Naive thymus-derived CD4-positive, alpha-beta T cell (primary cell): ENCODE measurements at regions of chr13 and their contacts with region 1.

Region 1: DNA sequence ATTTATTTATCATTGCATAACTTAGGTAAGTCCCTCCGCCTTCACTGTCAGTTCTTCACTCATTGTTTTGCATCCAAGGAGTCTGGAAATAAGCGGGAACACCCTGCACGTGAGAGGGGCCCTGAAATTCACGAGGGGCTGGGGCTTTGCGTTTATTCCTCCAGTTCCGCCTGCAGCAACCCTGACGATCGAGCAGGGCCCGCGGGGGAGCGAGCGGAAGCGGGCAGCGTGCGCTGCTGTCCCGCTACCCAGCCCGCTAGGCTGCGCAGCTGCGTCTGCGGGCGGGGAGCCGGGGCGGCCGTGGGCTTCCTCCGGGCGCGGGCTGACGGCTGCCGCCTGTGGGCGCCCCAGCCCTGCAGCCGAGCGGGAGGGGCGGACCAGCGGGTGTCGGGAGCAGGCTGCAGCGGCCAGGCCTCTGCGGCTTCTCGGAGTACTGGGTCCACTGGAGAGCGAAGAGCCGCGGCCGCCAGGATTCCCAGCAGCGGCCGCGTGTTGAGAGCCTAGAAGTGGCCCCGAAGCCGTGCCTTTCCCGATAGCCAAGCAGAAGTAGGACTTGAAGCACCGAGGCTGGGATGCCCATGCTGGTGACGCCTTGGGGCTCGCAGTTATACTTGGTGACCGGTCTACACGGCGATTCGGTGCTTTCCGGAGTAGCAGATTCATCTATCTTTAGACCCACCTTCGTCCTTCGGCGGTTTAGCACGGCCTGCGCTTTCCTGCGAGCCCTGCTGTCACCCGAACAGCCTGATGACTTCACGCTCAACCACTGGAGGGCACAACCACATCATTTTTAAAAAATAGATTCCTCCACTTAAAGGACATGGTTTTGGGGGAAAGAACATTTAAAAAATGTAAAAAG is 32.9 kb upstream of the SACS start:
- DNase-seq: peak; percentile 38 to 69 (median 65)
- ATAC-seq: peak; percentile 94
- H3K4me3 ChIP-seq: peak overlapping the region; percentile 65
- H3K4me3 Mint-ChIP-seq: peak overlapping the region; percentile 79 to 89 (median 84)
- H3K27ac ChIP-seq: no peak overlapping the region
- H3K27ac Mint-ChIP-seq: peak overlapping the region in 4 of 9 donors; percentile 45 to 69 (median 61)
- H3K4me1 ChIP-seq: peaks cover 0 to 4% of the 10 kb centered on the region in 2 donors
- H3K4me1 Mint-ChIP-seq: peaks cover 0 to 8% (median 4%) of the 10 kb centered on the region in 7 donors
- H3K27me3 ChIP-seq: no peaks in the 10 kb centered on the region
- H3K27me3 Mint-ChIP-seq: peaks cover 0 to 46% (median 6%) of the 10 kb centered on the region in 5 donors

Region 2: DNA sequence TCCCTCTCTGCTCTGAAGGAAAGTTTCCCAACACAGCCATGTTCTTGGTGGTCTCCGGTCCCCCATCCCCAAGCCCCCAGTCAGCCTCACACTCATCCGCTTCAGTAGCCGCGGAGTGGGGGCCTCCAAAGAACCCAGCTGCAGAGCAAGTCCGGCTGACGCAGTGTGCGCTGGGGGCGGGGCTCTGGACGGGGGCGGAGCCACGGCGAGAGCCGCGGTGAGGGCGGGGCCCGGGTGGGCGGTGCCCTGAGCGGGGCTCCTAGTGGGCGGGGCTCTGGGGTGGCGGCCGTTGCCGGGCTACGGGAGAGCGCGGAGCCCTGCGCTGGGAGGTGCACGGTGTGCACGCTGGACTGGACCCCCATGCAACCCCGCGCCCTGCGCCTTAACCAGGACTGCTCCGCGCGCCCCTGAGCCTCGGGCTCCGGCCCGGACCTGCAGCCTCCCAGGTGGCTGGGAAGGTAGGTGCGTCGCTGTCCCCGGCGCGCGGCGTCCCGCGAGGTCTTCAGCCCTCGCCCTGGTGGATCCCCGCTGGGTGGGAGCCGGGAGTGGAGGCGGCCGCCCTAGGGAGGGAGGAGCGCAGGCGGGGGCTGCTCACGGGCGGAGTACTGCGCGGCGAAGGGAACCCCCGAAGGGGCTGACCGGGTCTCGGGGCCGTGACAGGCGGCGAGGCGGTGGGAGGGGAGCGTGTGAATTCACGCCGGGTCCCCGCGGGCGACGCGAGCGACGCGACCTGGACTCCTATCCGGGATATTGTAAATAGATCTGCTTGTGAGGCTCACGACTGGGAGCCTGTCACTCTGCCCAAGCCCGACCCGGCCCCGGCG is 112.9 kb after region 1 on chr13:
- CTCF ChIA-PET with region 1: no interaction called
- POLR2A ChIA-PET with region 1: no interaction called
- intact Hi-C with region 1: loop called (anchors 1 kb)
- DNase-seq: peak; percentile 76 to 96 (median 87)
- ATAC-seq: peak; percentile 99
- H3K4me3 ChIP-seq: peak overlapping the region; percentile 79
- H3K4me3 Mint-ChIP-seq: peak overlapping the region; percentile 43 to 89 (median 81)
- H3K27ac ChIP-seq: peak overlapping the region; percentile 67
- H3K27ac Mint-ChIP-seq: peak overlapping the region in 3 of 9 donors; percentile 46 to 80 (median 65)
- H3K4me1 ChIP-seq: peaks cover 0 to 4% of the 10 kb centered on the region in 2 donors
- H3K4me1 Mint-ChIP-seq: peaks cover 10 to 22% (median 18%) of the 10 kb centered on the region in 7 donors
- H3K27me3 ChIP-seq: peaks cover 0 to 11% of the 10 kb centered on the region in 2 donors
- H3K27me3 Mint-ChIP-seq: peaks cover 34 to 72% (median 46%) of the 10 kb centered on the region in 5 donors

Region 3: DNA sequence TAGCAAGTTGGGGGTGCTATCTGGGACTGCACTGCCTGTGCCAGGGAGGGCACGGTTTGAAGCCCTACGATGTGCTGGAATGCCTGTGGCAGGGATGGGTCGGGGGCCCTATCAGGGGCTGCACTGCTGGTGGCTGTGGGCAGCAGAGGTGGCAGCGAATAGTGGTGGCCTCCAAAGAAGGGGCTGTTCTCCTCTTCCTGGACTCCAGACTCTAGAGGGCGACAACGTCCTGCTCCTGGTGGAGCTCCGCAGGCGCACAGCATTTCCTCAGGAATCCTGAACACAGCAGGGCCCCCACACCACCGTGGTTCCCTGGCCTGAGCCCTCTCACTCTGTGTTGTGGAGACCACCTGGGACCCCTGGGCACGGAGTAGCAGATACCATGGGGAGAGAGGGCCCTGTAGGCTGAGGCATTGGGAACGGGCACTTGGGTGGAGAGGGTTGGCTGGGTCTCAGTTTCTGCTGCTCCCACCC is 249.4 kb after region 1 on chr13:
- CTCF ChIA-PET with region 1: no interaction called
- POLR2A ChIA-PET with region 1: no interaction called
- intact Hi-C with region 1: loop called in 1 of 2 experiments (anchors 10 kb)
- DNase-seq: no peak
- ATAC-seq: no peak
- H3K4me3 ChIP-seq: no peak overlapping the region
- H3K4me3 Mint-ChIP-seq: no peak overlapping the region
- H3K27ac ChIP-seq: no peak overlapping the region
- H3K27ac Mint-ChIP-seq: no peak overlapping the region
- H3K4me1 ChIP-seq: no peaks in the 10 kb centered on the region
- H3K4me1 Mint-ChIP-seq: peaks cover 14 to 38% (median 32%) of the 10 kb centered on the region in 7 donors
- H3K27me3 ChIP-seq: no peaks in the 10 kb centered on the region
- H3K27me3 Mint-ChIP-seq: peaks cover 0 to 18% (median 11%) of the 10 kb centered on the region in 5 donors

Region 4: GRCh38 chr13:23871616-23872220 is 405.3 kb after region 1 on chr13:
- CTCF ChIA-PET with region 1: interaction called, 11 read pairs
- POLR2A ChIA-PET with region 1: no interaction called
- intact Hi-C with region 1: loop called (anchors 1 kb)
- DNase-seq: peak in 4 of 9 donors; percentile 11 to 30 (median 23)
- ATAC-seq: no peak
- H3K4me3 ChIP-seq: no peak overlapping the region
- H3K4me3 Mint-ChIP-seq: no peak overlapping the region
- H3K27ac ChIP-seq: no peak overlapping the region
- H3K27ac Mint-ChIP-seq: no peak overlapping the region
- H3K4me1 ChIP-seq: no peaks in the 10 kb centered on the region
- H3K4me1 Mint-ChIP-seq: no peaks in the 10 kb centered on the region
- H3K27me3 ChIP-seq: no peaks in the 10 kb centered on the region
- H3K27me3 Mint-ChIP-seq: no peaks in the 10 kb centered on the region

Region 5: DNA sequence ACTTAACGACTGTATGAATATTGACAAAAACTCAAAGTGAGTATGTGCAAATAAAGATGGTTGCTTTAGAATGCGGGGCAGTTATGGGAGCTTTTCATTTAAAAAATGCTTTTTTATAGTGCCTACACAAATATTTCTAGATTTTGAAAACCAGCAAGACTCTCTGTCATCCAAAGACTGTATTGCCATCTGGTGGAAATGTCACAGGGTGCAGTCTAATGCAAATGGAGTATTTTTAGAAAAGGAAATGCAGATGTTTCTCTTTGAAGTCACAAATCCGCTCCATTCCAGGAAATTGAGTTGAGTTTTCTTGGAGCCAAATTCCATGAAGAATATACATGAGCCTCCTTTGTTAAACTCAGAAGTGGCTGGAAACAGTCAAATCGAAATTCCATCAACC is 433.2 kb after region 1 on chr13:
- CTCF ChIA-PET with region 1: interaction called, 6 read pairs
- POLR2A ChIA-PET with region 1: no interaction called
- intact Hi-C with region 1: loop called in 1 of 2 experiments (anchors 1 kb)
- DNase-seq: peak in 5 of 9 donors; percentile 12 to 41 (median 28)
- ATAC-seq: peak; percentile 74
- H3K4me3 ChIP-seq: no peak overlapping the region
- H3K4me3 Mint-ChIP-seq: no peak overlapping the region
- H3K27ac ChIP-seq: no peak overlapping the region
- H3K27ac Mint-ChIP-seq: no peak overlapping the region
- H3K4me1 ChIP-seq: no peaks in the 10 kb centered on the region
- H3K4me1 Mint-ChIP-seq: peaks cover 0 to 10% (median 3%) of the 10 kb centered on the region in 7 donors
- H3K27me3 ChIP-seq: peaks cover 0 to 10% of the 10 kb centered on the region in 2 donors
- H3K27me3 Mint-ChIP-seq: peaks cover 26 to 42% (median 37%) of the 10 kb centered on the region in 5 donors

Region 6: DNA sequence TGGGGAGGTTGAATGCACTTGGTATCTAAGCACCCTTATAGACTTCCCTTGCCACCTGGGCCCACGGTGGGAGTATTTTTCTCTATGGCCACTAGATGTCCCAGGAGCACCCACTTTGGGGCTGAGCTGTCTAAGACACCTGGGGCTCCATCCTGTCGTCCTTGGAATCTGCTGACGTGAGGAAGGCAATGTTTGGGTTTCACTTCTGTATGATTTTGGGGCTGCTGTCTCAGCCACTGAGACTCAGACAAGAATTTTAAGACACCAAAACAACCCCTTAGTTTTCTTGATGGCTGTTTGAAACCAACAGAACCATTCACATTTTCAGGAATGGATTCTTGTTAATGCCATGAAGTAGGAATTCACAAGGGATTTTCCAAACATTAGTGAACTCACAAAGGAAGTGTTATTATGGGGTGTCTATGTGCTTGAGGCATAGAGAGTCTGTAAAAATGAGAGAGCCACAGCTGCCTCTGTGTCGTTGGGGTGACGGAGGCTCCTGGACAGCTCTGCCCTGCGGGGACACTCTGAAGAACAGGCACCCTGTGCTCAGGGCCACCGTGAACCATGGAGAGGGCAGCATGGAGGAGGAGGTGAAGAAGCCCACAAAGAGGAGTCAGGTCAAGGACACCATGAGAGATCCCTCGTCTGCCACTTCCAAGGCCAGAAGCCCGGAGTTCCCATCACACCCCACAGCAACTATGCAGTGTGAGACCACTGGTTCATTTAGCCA is 587.3 kb after region 1 on chr13:
- CTCF ChIA-PET with region 1: no interaction called
- POLR2A ChIA-PET with region 1: no interaction called
- intact Hi-C with region 1: loop called in 1 of 2 experiments (anchors 1 kb)
- DNase-seq: peak; percentile 24 to 70 (median 61)
- ATAC-seq: peak; percentile 91
- H3K4me3 ChIP-seq: no peak overlapping the region
- H3K4me3 Mint-ChIP-seq: no peak overlapping the region
- H3K27ac ChIP-seq: no peak overlapping the region
- H3K27ac Mint-ChIP-seq: peak overlapping the region in 5 of 9 donors; percentile 21 to 68 (median 24)
- H3K4me1 ChIP-seq: no peaks in the 10 kb centered on the region
- H3K4me1 Mint-ChIP-seq: peaks cover 0 to 12% (median 9%) of the 10 kb centered on the region in 7 donors
- H3K27me3 ChIP-seq: no peaks in the 10 kb centered on the region
- H3K27me3 Mint-ChIP-seq: peaks cover 3 to 22% (median 7%) of the 10 kb centered on the region in 5 donors

Region 7: GRCh38 chr13:24922745-24923591 is 1456.6 kb after region 1 on chr13:
- CTCF ChIA-PET with region 1: no interaction called
- POLR2A ChIA-PET with region 1: no interaction called
- intact Hi-C with region 1: loop called in 1 of 2 experiments (anchors 2 kb)
- DNase-seq: peak; percentile 79 to 93 (median 87)
- ATAC-seq: peak; percentile 100
- H3K4me3 ChIP-seq: peak overlapping the region; percentile 78
- H3K4me3 Mint-ChIP-seq: peak overlapping the region; percentile 89 to 100 (median 98)
- H3K27ac ChIP-seq: peak overlapping the region; percentile 71
- H3K27ac Mint-ChIP-seq: peak overlapping the region; percentile 73 to 95 (median 91)
- H3K4me1 ChIP-seq: no peaks in the 10 kb centered on the region
- H3K4me1 Mint-ChIP-seq: peaks cover 0 to 22% (median 14%) of the 10 kb centered on the region in 7 donors
- H3K27me3 ChIP-seq: no peaks in the 10 kb centered on the region
- H3K27me3 Mint-ChIP-seq: peaks cover 0 to 12% (median 0%) of the 10 kb centered on the region in 5 donors